ENCODE measurements at regions of chr21 and their contacts with region 1.

Region 1: DNA sequence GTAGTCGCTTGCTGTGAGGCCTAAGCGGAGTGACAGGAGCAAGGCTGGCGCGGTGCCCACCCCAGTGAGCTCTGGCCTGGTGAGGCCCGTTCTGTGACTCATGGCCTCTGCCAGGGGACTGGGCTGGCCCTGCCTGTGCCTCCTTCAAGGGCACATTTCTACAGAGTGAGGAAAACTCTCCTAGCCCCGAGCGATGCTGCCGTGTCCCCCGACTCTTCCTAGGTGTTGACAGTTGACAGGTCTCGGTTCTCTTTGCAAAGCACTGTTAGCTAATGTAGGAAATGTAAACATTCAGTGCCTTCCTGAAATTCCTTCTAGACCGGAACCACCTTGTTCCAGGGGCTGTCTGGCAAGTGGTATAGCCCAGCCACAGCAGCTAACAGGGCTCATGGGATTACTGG is 43.9 kb downstream of the ABCG1 start:
- DNase-seq: peak; percentile 89
- ATAC-seq: peak; percentile 61
- H3K4me3 ChIP-seq: no peak overlapping the region
- H3K27ac ChIP-seq: peak overlapping the region; percentile 70
- H3K4me1 ChIP-seq: peaks cover 47% of the 10 kb centered on the region
- H3K27me3 ChIP-seq: no peaks in the 10 kb centered on the region
- CTCF ChIP-seq: no peak

Region 2: DNA sequence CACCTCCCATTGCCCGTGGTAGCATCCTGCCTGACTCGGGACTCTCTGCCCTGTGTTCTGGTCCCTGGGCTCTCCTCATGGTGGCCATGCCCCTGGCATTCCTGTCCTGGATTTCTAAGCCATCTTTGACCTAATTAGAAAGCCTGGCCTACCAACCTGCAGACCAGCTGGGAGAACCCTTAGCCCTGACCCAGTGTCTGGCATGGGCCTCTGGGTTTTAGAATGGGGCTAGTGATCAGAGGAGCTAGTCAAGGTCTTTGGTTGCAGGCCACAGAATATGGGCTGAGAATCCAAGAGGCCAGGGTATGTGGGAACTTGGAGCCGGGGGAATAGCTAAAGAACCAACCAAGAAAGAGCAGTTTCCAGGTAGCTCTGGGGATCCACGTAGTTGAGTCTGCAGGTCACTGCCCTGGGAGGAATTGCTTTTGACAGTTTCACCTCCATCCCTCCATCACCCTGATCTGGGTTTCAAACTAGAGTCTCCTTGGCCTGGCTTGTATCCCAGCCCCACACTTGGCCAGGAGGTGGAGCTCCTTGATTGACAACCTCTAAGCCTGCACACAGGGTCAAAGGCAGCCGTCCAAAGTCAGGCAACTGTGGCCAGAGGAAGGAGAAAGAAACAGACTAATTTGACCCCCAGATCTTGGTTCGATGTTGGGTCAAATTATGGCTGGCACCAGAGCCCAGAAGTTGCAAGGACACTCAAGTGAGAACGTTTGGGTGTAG is 98.6 kb before region 1 on chr21:
- intact Hi-C with region 1: loop called (anchors 10 kb)
- DNase-seq: peak; percentile 75
- ATAC-seq: peak; percentile 87
- H3K4me3 ChIP-seq: no peak overlapping the region
- H3K27ac ChIP-seq: no peak overlapping the region
- H3K4me1 ChIP-seq: no peaks in the 10 kb centered on the region
- H3K27me3 ChIP-seq: no peaks in the 10 kb centered on the region
- CTCF ChIP-seq: peak; percentile 58